T-cell (primary cell): ENCODE measurements at regions of chr12 and their contacts with region 1.

Region 1: DNA sequence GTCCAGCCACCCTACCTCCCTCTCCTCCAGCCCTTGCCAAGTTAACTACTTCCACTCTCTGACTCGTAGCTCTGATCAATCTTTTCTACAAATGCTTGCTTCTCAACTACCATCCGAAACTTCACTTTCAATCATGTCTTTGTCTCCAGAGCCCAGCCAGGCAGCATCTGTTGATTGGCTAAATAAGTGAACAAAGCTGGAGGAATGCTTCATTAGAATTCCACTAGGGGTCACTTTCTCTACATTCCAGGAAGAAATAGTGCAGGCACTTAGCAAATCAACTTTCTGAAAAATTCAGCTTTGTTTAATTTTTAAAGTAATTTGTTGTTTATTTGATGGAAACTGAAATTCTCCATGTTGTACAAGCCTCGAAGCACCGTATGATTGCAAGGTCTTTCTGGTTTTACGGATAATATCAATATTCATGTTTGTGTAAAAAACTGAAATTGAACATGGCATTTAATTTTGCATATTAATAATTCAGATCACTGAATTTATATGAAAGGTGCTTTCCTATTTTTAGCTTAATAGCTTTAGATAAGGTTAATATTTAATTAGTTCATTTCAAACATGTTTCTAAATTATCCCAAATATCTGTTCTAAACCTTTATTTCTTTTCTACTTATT is 32.4 kb upstream of the HELB start:
- DNase-seq: peak in 6 of 35 experiments; percentile 5 to 64 (median 10)
- ATAC-seq: peak in 3 of 4 experiments; percentile 64 to 75 (median 70)
- H3K4me3 ChIP-seq: no peak overlapping the region
- H3K4me3 Mint-ChIP-seq: no peak overlapping the region
- H3K27ac ChIP-seq: no peak overlapping the region
- H3K27ac Mint-ChIP-seq: no peak overlapping the region
- H3K4me1 ChIP-seq: peaks cover 4 to 21% of the 10 kb centered on the region in 2 experiments
- H3K4me1 Mint-ChIP-seq: peaks cover 7 to 15% (median 8%) of the 10 kb centered on the region in 3 donors
- H3K27me3 ChIP-seq: no peaks in the 10 kb centered on the region
- H3K27me3 Mint-ChIP-seq: no peaks in the 10 kb centered on the region

Region 2: DNA sequence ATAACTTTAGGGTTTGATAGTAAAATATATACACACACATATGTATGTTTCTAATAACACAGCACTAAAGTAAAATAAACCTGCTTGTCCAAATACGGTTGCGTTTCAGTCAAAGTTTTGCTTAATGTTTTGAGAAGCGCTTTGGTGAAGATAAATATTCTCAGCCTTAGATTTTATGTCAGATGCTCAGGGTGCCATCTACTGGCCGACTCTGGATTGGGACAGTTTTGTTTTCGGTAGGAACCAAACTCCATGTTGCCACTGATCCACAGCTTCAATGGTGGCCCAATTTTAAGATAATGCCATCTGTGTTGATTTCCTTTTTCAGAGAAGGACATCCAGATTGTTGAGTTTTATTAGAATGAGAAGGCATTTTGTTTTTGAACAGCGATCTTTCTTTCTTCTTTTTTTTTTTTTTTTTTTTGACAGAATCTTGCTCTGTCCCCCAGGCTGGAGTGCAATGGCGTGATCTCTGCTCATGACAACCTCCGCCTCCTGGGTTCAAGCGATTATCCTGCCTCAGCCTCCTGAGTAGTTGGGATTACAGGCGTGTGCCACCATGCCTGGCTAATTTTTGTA is 182.4 kb before region 1 on chr12:
- CTCF ChIA-PET with region 1: interaction called in 1 of 2 experiments, 11 read pairs
- POLR2A ChIA-PET with region 1: no interaction called
- DNase-seq: peak in 31 of 35 experiments; percentile 9 to 62 (median 34)
- ATAC-seq: peak in 1 of 4 experiments; percentile 60
- H3K4me3 ChIP-seq: no peak overlapping the region
- H3K4me3 Mint-ChIP-seq: no peak overlapping the region
- H3K27ac ChIP-seq: no peak overlapping the region
- H3K27ac Mint-ChIP-seq: no peak overlapping the region
- H3K4me1 ChIP-seq: no peaks in the 10 kb centered on the region
- H3K4me1 Mint-ChIP-seq: no peaks in the 10 kb centered on the region
- H3K27me3 ChIP-seq: peaks cover 0 to 11% of the 10 kb centered on the region in 2 experiments
- H3K27me3 Mint-ChIP-seq: peaks cover 21 to 26% of the 10 kb centered on the region in 2 donors

Region 3: GRCh38 chr12:66235626-66236281 is 34.1 kb before region 1 on chr12:
- CTCF ChIA-PET with region 1: no interaction called
- POLR2A ChIA-PET with region 1: no interaction called
- DNase-seq: peak in 1 of 35 experiments; percentile 13
- ATAC-seq: no peak
- H3K4me3 ChIP-seq: peak overlapping the region in 1 of 2 donors; percentile 54
- H3K4me3 Mint-ChIP-seq: peak overlapping the region; percentile 22 to 39 (median 34)
- H3K27ac ChIP-seq: no peak overlapping the region
- H3K27ac Mint-ChIP-seq: no peak overlapping the region
- H3K4me1 ChIP-seq: peaks cover 0 to 3% of the 10 kb centered on the region in 2 experiments
- H3K4me1 Mint-ChIP-seq: peaks cover 0 to 8% (median 7%) of the 10 kb centered on the region in 3 donors
- H3K27me3 ChIP-seq: peaks cover 0 to 16% of the 10 kb centered on the region in 2 experiments
- H3K27me3 Mint-ChIP-seq: peaks cover 22 to 38% of the 10 kb centered on the region in 2 donors

Region 4: GRCh38 chr12:66288121-66288520 is 18.3 kb after region 1 on chr12:
- CTCF ChIA-PET with region 1: interaction called, 5 to 14 read pairs
- POLR2A ChIA-PET with region 1: no interaction called
- DNase-seq: peak; percentile 18 to 88 (median 58)
- ATAC-seq: peak; percentile 92 to 98 (median 94)
- H3K4me3 ChIP-seq: peak overlapping the region; percentile 12 to 23
- H3K4me3 Mint-ChIP-seq: peak overlapping the region; percentile 41 to 71 (median 59)
- H3K27ac ChIP-seq: peak overlapping the region; percentile 12
- H3K27ac Mint-ChIP-seq: peak overlapping the region; percentile 85 to 92
- H3K4me1 ChIP-seq: peaks cover 55 to 78% of the 10 kb centered on the region in 2 experiments
- H3K4me1 Mint-ChIP-seq: peaks cover 91 to 95% (median 93%) of the 10 kb centered on the region in 3 donors
- H3K27me3 ChIP-seq: no peaks in the 10 kb centered on the region
- H3K27me3 Mint-ChIP-seq: no peaks in the 10 kb centered on the region

Region 5: DNA sequence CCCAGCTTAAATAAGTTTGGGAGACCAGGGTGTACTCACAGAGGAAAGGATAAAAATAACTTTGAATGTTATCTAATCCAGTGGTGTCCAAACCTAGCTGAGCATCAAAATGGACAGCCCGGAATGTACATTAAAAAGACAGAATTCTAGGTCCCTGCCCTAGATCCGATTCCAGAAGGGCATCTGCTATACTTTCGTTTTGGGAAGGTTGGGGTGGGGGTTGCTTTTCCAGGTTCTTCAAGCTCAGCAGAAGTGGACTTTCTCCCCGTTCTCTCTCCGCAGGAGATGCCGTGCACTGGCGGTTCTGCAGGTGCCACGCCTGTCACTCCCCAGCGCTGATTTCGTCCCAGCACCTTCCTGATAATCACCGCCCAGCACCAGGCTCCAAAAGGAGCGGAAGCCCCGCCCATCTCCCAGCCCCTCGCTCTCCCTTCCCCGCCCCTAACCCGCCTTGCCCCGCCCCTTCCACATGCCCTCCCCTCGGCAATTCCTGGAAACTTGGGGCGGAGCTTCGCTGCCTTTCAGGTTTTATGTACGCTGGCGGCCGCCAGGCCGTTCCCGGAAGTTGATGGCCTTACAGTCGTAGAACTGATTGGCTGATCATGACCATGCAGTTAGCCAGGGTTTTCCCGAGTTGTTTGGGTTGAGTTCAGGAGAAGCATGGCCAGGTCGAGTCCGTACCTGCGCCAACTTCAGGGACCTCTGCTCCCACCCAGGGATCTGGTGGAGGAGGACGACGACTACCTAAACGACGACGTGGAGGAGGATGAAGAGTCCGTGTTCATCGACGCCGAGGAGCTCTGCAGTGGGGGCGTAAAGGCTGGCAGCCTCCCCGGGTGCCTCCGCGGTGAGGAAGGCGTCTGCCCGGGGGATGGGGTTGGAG is 32.3 kb after region 1 on chr12 and contains the start of gene HELB:
- CTCF ChIA-PET with region 1: interaction called in 1 of 2 experiments, 22 read pairs
- POLR2A ChIA-PET with region 1: interaction called in 1 of 2 experiments, 3 read pairs
- DNase-seq: peak; percentile 84 to 97 (median 92)
- ATAC-seq: peak; percentile 81 to 89 (median 85)
- H3K4me3 ChIP-seq: peak within 1 kb of the TSS; percentile 94 to 98
- H3K4me3 Mint-ChIP-seq: peak within 1 kb of the TSS; percentile 99
- H3K27ac ChIP-seq: peak within 1 kb of the TSS; percentile 87
- H3K27ac Mint-ChIP-seq: peak within 1 kb of the TSS; percentile 98 to 99
- H3K4me1 ChIP-seq: peaks cover 7 to 13% of the 10 kb centered on the region in 2 experiments
- H3K4me1 Mint-ChIP-seq: peaks cover 45 to 68% (median 47%) of the 10 kb centered on the region in 3 donors
- H3K27me3 ChIP-seq: no peaks in the 10 kb centered on the region
- H3K27me3 Mint-ChIP-seq: no peaks in the 10 kb centered on the region
- total RNA-seq, gene HELB: 38.6 to 66.4 (median 45.7) TPM

Region 6: GRCh38 chr12:66409195-66409871 is 139.5 kb after region 1 on chr12:
- CTCF ChIA-PET with region 1: interaction called, 19 to 21 read pairs
- POLR2A ChIA-PET with region 1: no interaction called
- DNase-seq: peak in 31 of 35 experiments; percentile 2 to 69 (median 24)
- ATAC-seq: peak in 1 of 4 experiments; percentile 61
- H3K4me3 ChIP-seq: no peak overlapping the region
- H3K4me3 Mint-ChIP-seq: no peak overlapping the region
- H3K27ac ChIP-seq: no peak overlapping the region
- H3K27ac Mint-ChIP-seq: no peak overlapping the region
- H3K4me1 ChIP-seq: peaks cover 0 to 3% of the 10 kb centered on the region in 2 experiments
- H3K4me1 Mint-ChIP-seq: no peaks in the 10 kb centered on the region
- H3K27me3 ChIP-seq: peaks cover 0 to 7% of the 10 kb centered on the region in 2 experiments
- H3K27me3 Mint-ChIP-seq: peaks cover 12 to 22% of the 10 kb centered on the region in 2 donors

Region 7: DNA sequence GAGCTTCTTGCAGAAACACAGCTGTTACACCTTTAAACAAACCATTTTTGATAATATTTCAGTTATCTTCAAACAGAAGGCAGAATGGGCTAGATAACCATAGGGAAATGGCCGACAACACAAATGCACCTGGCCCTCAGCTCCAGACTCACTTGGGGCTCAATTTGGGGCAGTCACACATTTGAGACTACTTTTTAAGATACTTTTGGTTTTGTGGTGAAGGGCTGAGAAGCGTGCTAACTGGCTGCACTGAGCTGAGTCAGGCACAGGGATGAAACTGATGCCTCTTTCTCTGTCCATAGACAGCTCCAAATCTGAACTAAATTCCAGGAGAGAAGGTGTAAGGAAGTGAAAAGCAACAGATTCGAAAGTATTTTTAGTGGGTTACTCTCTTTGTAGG is 427.5 kb after region 1 on chr12:
- CTCF ChIA-PET with region 1: interaction called, 4 to 12 read pairs
- POLR2A ChIA-PET with region 1: no interaction called
- DNase-seq: no peak
- ATAC-seq: no peak
- H3K4me3 ChIP-seq: no peak overlapping the region
- H3K4me3 Mint-ChIP-seq: no peak overlapping the region
- H3K27ac ChIP-seq: no peak overlapping the region
- H3K27ac Mint-ChIP-seq: no peak overlapping the region
- H3K4me1 ChIP-seq: peaks cover 7 to 17% of the 10 kb centered on the region in 2 experiments
- H3K4me1 Mint-ChIP-seq: peaks cover 14 to 34% (median 23%) of the 10 kb centered on the region in 3 donors
- H3K27me3 ChIP-seq: peaks cover 0 to 5% of the 10 kb centered on the region in 2 experiments
- H3K27me3 Mint-ChIP-seq: peaks cover 9 to 17% of the 10 kb centered on the region in 2 donors